PC-3 (cell line): ENCODE measurements at regions of chr22 and their contacts with region 1.

Region 1: GRCh38 chr22:45435544-45436139 is 22.1 kb downstream of the RIBC2 start:
- DNase-seq: peak; percentile 83
- ATAC-seq: peak; percentile 96
- H3K4me3 ChIP-seq: no peak overlapping the region
- H3K27ac ChIP-seq: no peak overlapping the region
- H3K4me1 ChIP-seq: peaks cover 4% of the 10 kb centered on the region
- H3K27me3 ChIP-seq: no peaks in the 10 kb centered on the region
- CTCF ChIP-seq: peak; percentile 86

Region 2: DNA sequence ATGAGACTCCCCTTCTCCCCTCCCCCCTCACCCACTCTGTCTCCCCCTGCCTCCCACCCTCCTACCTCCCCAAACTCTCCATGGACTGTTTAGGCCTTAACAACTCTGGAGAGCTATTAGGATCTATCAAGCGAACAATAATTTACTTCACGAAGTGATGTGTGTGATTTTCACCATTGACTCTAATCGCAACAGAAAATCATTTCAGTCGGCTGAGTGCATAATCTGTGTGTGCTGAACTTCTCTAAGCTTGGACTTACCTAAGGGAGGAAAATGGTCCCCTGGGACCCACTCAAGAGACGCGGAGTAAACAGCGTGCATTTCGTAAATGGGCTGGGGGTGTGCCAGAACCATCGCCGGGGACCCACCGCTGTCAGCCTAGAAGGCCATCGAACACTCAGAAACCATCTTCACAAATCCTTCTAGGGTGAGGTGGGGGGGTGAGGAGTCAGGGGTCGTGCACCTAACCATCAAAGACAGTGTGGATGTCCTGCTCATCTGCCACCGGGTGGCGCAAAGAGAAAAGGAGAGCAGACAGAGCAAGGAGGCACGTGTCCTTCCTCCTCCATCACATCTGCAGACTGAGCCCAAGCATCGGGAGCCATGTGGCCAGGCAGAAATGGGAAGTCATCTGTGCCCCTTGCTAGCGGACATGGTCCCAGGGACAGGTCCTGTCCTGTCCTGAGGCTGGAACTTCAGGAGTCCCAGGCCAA is 334.0 kb before region 1 on chr22:
- CTCF ChIA-PET with region 1: interaction called, 3 read pairs
- POLR2A ChIA-PET with region 1: no interaction called
- intact Hi-C with region 1: loop called (anchors 5 kb)
- DNase-seq: peak; percentile 68
- ATAC-seq: peak; percentile 86
- H3K4me3 ChIP-seq: no peak overlapping the region
- H3K27ac ChIP-seq: no peak overlapping the region
- H3K4me1 ChIP-seq: peaks cover 10% of the 10 kb centered on the region
- H3K27me3 ChIP-seq: no peaks in the 10 kb centered on the region
- CTCF ChIP-seq: peak; percentile 81

Region 3: DNA sequence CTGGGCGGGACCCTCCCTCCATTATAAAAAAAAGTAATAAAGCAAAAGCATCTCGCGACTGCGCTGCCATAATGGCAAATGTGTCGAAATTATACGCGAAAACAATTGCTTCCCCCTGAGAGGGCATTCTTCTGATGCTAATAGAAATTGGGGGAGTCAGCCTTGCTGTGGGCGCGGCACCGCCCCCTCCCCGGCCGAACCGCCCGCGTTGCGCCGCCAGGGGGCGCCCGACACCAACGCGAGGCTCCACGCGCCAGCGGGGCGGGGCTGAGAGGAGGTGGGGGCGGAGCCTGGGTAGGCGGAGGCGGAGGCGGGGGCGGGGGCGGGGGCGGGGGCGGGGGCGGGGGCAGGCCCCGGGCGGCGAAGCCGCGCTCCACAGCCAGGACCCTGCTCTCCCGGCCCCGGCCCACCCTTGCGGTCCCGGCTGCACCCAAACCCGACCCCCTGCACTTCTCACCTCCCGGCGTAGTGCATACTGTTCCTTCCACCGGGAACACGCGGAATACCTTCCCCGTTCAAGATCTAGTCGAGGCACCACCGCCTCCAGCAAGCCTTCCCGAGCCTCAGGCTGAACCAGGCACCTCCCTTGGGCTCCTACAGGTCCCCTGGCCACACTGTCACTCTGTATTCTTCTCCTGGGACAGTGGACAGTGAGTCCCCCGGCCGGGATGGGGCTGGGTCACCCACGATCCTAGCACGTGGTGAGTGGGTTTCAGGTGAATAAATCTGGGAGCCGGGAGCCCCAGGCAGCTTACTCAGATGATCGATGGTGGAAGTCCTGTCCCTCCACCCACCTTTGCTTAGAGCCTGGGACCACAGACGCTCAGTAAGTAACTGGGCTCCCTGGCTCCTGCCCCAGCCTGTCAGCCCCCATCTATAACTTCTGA is 166.4 kb before region 1 on chr22:
- CTCF ChIA-PET with region 1: no interaction called
- POLR2A ChIA-PET with region 1: no interaction called
- intact Hi-C with region 1: loop called (anchors 1 kb)
- DNase-seq: peak; percentile 78
- ATAC-seq: peak; percentile 79
- H3K4me3 ChIP-seq: peak overlapping the region; percentile 74
- H3K27ac ChIP-seq: no peak overlapping the region
- H3K4me1 ChIP-seq: peaks cover 6% of the 10 kb centered on the region
- H3K27me3 ChIP-seq: no peaks in the 10 kb centered on the region
- CTCF ChIP-seq: peak; percentile 71

Region 4: DNA sequence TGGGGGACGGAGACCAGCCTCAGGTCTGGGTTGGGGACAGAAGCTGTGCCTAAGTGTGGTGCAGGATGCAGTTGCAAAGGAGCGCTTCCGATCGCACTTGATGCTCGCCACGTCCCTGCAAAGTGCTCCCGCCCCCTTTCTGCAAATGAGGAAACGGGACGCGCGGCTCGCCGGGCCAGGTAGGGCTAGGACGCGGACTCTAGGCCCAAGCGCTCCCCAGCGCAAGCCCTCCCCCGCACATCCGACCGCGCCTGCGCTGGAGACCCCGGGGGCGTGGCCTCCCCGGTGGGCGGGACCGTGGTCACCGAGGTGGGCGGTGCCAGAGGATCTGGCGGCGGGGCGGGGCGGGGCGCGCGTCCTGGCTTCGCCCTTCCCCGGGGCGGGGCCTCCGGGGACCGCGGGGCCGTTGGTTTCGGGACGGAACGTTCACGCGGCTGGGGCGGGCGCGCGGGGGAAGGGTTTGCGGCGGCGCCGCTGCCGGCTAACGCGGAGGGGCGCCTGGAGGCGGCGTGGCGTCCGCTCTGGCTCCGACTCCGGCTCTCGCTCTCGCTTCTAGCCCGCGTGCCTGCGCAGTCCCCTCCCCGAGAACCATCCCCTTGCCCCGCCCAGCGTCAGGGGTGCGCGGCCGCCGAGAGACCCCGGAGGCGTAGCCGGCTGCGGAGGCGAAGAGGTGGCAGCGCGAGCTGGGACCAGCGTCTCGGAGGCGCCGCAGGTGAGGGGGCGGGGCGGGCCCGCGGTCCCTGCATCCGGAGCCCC is 126.0 kb before region 1 on chr22 and contains the start of gene FAM118A:
- CTCF ChIA-PET with region 1: no interaction called
- POLR2A ChIA-PET with region 1: no interaction called
- intact Hi-C with region 1: loop called (anchors 1 kb)
- DNase-seq: peak; percentile 91
- ATAC-seq: peak; percentile 86
- H3K4me3 ChIP-seq: peak within 1 kb of the TSS; percentile 95
- H3K27ac ChIP-seq: peak within 1 kb of the TSS; percentile 4; the same call in 1 of the 2 replicates
- H3K4me1 ChIP-seq: peaks cover 14% of the 10 kb centered on the region
- H3K27me3 ChIP-seq: no peaks in the 10 kb centered on the region
- CTCF ChIP-seq: no peak
- total RNA-seq, gene FAM118A: 19.6 and 20.3 TPM in 2 replicates

Region 5: GRCh38 chr22:45577746-45578523 is 142.3 kb after region 1 on chr22:
- CTCF ChIA-PET with region 1: no interaction called
- POLR2A ChIA-PET with region 1: no interaction called
- intact Hi-C with region 1: no loop called
- DNase-seq: peak; percentile 88
- ATAC-seq: peak; percentile 93
- H3K4me3 ChIP-seq: no peak overlapping the region
- H3K27ac ChIP-seq: no peak overlapping the region
- H3K4me1 ChIP-seq: no peaks in the 10 kb centered on the region
- H3K27me3 ChIP-seq: no peaks in the 10 kb centered on the region
- CTCF ChIP-seq: peak; percentile 92